Activated naive CD4-positive, alpha-beta T cell treated with anti-CD3 and anti-CD28 coated beads for 36 hours (primary cell): ENCODE measurements at regions of chr19 and their contacts with region 1.

Region 1: GRCh38 chr19:6297202-6297601 is 17.4 kb upstream of the MLLT1 start:
- DNase-seq: no peak
- H3K4me3 Mint-ChIP-seq: no peak overlapping the region
- H3K27ac Mint-ChIP-seq: no peak overlapping the region
- H3K4me1 Mint-ChIP-seq: no peaks in the 10 kb centered on the region
- H3K27me3 Mint-ChIP-seq: no peaks in the 10 kb centered on the region

Region 2: DNA sequence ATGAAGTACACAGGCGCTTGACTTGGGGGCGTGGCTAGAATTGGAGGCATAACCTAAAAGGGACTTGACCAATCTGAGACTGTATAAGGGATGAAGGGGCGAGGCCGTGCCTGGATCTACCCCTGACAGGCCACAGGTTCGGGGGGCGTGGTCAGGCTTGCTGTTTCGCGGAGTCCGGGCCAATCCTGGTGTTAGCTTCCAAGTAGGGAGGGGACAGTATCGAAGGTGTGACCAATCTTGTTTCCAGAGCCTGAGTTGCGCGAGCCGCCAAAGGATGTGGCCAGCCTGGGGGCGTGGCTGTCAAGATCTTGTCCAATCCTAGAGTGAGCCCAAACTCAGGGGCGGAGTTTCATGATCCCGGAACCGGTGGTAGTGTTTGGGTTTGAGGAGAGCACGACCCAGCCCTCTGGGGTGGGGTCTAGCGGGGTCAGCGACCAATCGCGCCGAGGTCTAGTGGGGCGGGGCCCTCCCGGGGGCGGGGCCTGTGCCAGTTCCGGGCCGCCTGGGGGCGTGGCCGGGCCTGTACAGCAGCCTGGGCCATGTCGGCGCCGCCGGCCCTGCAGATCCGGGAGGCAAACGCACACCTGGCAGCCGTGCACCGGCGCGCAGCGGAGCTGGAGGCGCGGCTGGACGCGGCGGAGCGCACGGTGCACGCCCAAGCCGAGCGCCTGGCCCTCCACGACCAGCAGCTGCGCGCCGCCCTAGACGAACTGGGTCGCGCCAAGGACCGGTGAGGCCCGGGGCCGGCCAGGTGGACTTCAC is 392.7 kb before region 1 on chr19 and contains the start of gene VMAC:
- CTCF ChIA-PET with region 1: no interaction called
- intact Hi-C with region 1: no loop called
- DNase-seq: peak; percentile 100
- H3K4me3 Mint-ChIP-seq: peak within 1 kb of the TSS; percentile 94
- H3K27ac Mint-ChIP-seq: peak within 1 kb of the TSS; percentile 99
- H3K4me1 Mint-ChIP-seq: peaks cover 37% of the 10 kb centered on the region
- H3K27me3 Mint-ChIP-seq: no peaks in the 10 kb centered on the region
- total RNA-seq, gene VMAC: 1.5 to 2.0 TPM

Region 3: GRCh38 chr19:6048808-6049405 is 248.3 kb before region 1 on chr19:
- CTCF ChIA-PET with region 1: interaction called, 6 read pairs
- intact Hi-C with region 1: loop called (anchors 5 kb)
- DNase-seq: peak; percentile 88
- H3K4me3 Mint-ChIP-seq: no peak overlapping the region
- H3K27ac Mint-ChIP-seq: no peak overlapping the region
- H3K4me1 Mint-ChIP-seq: peaks cover 3% of the 10 kb centered on the region
- H3K27me3 Mint-ChIP-seq: no peaks in the 10 kb centered on the region

Region 4: GRCh38 chr19:6125571-6125989 is 171.6 kb before region 1 on chr19:
- CTCF ChIA-PET with region 1: interaction called, 6 read pairs
- intact Hi-C with region 1: loop called (anchors 1 kb)
- DNase-seq: peak; percentile 76
- H3K4me3 Mint-ChIP-seq: no peak overlapping the region
- H3K27ac Mint-ChIP-seq: no peak overlapping the region
- H3K4me1 Mint-ChIP-seq: no peaks in the 10 kb centered on the region
- H3K27me3 Mint-ChIP-seq: no peaks in the 10 kb centered on the region

Region 5: GRCh38 chr19:6167115-6167514 is 130.1 kb before region 1 on chr19:
- CTCF ChIA-PET with region 1: interaction called, 3 read pairs
- intact Hi-C with region 1: loop called (anchors 2 kb)
- DNase-seq: no peak
- H3K4me3 Mint-ChIP-seq: no peak overlapping the region
- H3K27ac Mint-ChIP-seq: no peak overlapping the region
- H3K4me1 Mint-ChIP-seq: no peaks in the 10 kb centered on the region
- H3K27me3 Mint-ChIP-seq: no peaks in the 10 kb centered on the region

Region 6: DNA sequence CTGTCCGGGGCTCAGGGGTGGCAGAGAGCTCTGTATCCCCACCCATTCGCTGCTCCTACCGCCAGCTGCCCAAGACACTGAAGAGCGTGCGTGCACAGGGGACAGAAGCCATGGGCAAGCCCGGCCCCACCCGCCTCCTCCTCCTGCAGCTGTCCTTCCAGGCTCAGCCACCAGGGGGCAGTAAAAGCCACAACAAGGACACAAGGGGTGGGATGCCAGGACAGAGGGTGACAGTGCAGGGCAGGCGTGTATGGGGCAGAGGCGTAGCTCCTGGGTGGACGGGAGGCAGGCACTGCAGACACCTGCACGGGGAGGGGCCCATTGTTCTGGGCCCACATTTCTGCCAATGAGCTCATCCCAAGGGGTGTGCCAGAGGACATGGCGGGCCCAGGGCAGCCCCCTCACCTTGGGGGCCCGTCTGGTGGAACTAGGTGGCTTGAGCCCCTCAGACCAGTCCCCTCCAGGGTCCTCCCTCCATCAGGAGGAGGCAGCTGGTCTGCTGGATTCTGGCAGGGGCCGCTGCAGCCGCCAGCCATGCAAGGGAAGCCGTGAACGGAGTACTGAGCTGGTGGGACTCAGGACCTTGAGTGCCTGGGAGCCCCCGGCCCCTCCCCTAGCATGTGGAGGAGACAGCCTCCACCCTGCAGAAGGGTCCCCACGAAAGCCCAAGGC is 78.6 kb before region 1 on chr19:
- CTCF ChIA-PET with region 1: interaction called, 9 read pairs
- intact Hi-C with region 1: loop called (anchors 2 kb)
- DNase-seq: peak; percentile 91
- H3K4me3 Mint-ChIP-seq: no peak overlapping the region
- H3K27ac Mint-ChIP-seq: no peak overlapping the region
- H3K4me1 Mint-ChIP-seq: no peaks in the 10 kb centered on the region
- H3K27me3 Mint-ChIP-seq: no peaks in the 10 kb centered on the region